ENCODE measurements at regions of chr1 and their contacts with region 1.

Region 1: DNA sequence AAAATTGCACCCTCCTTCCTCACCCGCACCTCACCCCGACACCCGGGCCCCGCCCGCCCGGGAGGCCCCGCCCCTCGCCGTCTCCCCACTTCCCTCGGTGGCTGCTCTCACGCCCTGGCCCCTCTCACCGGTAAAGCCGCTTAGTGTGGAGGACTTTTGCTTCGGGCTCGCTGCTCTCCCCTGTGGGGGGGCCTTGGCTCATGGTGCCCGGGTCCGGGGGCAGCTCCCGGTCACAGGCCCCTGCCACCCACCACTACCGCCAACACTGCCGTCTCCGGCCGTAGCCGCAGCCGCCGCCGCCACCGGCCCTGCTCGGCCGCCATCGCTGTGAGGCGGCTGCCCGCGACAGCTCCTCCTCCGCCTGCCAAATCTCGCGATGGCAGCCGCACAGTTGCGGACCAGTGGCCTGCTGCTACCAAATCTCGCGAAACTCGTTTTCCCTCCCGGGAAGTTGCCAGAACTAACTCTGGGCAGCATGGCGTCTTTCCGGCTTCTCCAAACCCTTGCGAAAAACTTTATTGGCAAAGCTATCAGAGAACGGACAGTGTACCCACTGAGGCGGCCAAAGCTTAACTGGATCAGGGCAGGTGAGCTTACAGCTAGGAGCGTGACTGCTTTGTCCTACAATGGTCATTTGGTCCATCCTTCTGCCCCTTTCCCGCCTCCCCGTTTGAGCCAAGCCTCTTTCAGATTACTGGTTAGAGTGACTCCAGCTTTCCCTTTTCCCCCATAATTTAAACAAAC is at the start of gene SMG5:
- DNase-seq: peak; percentile 98
- total RNA-seq, gene SMG5: 112 TPM

Region 2: GRCh38 chr1:156096640-156097391 is 185.8 kb before region 1 on chr1:
- intact Hi-C with region 1: no loop called
- DNase-seq: peak; percentile 93

Region 3: GRCh38 chr1:156160743-156161171 is 121.9 kb before region 1 on chr1:
- intact Hi-C with region 1: loop called (anchors 5 kb)
- DNase-seq: peak; percentile 90

Measured in cardiac septum (tissue), 1 donor.